Activated B cell treated with CpG ODN at 0.5 μM for 24 hours (primary cell): ENCODE measurements at regions of chr9 and their contacts with region 1.

Region 1: GRCh38 chr9:85716031-85716877 is 25.5 kb downstream of the AGTPBP1 start:
- DNase-seq: no peak
- ATAC-seq: peak; percentile 43
- H3K4me3 Mint-ChIP-seq: peak overlapping the region; percentile 40
- H3K27ac Mint-ChIP-seq: peak overlapping the region; percentile 78
- H3K4me1 Mint-ChIP-seq: peaks cover 55% of the 10 kb centered on the region
- H3K27me3 Mint-ChIP-seq: no peaks in the 10 kb centered on the region
- CTCF ChIP-seq: no peak

Region 2: DNA sequence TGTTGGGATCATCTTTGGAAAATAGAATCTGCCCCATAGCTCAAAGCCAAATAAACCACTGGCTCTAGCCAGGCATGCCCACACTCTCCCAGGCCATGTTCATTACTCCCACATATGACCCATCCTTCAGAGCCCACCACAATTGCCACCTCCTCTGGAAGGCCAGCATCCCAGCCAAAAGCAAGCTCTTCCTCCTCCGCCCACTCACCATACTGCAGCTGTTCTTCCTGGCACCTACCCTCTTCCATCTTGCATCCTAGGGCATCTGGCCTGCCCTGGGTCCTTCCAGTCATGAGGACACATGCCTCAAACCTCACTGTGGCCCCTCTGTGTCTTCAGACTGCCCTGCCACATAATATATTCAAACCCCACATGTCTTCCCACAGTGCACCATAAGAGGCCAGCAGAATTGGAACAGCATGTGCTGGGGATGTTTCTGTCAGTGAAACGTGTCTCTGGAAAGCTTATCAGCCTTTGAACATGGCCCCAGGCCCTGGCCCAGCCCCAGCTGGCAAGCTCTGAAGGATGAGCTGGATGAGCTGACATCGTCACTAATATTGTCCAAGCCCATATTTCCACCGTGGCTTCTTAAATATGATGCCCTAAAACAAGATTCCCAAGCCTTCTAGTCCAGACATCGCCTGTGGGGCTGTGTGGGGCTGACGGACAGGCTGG is 205.3 kb before region 1 on chr9:
- CTCF ChIA-PET with region 1: no interaction called
- POLR2A ChIA-PET with region 1: no interaction called
- intact Hi-C with region 1: no loop called
- DNase-seq: no peak
- ATAC-seq: no peak
- H3K4me3 Mint-ChIP-seq: no peak overlapping the region
- H3K27ac Mint-ChIP-seq: no peak overlapping the region
- H3K4me1 Mint-ChIP-seq: no peaks in the 10 kb centered on the region
- H3K27me3 Mint-ChIP-seq: peaks cover 9% of the 10 kb centered on the region
- CTCF ChIP-seq: no peak

Region 3: GRCh38 chr9:85702726-85703289 is 13.4 kb before region 1 on chr9:
- CTCF ChIA-PET with region 1: interaction called, 12 read pairs
- POLR2A ChIA-PET with region 1: no interaction called
- intact Hi-C with region 1: loop called (anchors 2 kb)
- DNase-seq: no peak
- ATAC-seq: no peak
- H3K4me3 Mint-ChIP-seq: no peak overlapping the region
- H3K27ac Mint-ChIP-seq: no peak overlapping the region
- H3K4me1 Mint-ChIP-seq: peaks cover 19% of the 10 kb centered on the region
- H3K27me3 Mint-ChIP-seq: no peaks in the 10 kb centered on the region
- CTCF ChIP-seq: no peak

Region 4: GRCh38 chr9:85729882-85730281 is 13.6 kb after region 1 on chr9:
- CTCF ChIA-PET with region 1: interaction called, 3 read pairs
- POLR2A ChIA-PET with region 1: interaction called, 3 read pairs
- intact Hi-C with region 1: loop called (anchors 1 kb)
- DNase-seq: no peak
- ATAC-seq: no peak
- H3K4me3 Mint-ChIP-seq: no peak overlapping the region
- H3K27ac Mint-ChIP-seq: no peak overlapping the region
- H3K4me1 Mint-ChIP-seq: peaks cover 42% of the 10 kb centered on the region
- H3K27me3 Mint-ChIP-seq: no peaks in the 10 kb centered on the region
- CTCF ChIP-seq: no peak